ENCODE measurements at regions of chr20 and their contacts with region 1.

Region 1: DNA sequence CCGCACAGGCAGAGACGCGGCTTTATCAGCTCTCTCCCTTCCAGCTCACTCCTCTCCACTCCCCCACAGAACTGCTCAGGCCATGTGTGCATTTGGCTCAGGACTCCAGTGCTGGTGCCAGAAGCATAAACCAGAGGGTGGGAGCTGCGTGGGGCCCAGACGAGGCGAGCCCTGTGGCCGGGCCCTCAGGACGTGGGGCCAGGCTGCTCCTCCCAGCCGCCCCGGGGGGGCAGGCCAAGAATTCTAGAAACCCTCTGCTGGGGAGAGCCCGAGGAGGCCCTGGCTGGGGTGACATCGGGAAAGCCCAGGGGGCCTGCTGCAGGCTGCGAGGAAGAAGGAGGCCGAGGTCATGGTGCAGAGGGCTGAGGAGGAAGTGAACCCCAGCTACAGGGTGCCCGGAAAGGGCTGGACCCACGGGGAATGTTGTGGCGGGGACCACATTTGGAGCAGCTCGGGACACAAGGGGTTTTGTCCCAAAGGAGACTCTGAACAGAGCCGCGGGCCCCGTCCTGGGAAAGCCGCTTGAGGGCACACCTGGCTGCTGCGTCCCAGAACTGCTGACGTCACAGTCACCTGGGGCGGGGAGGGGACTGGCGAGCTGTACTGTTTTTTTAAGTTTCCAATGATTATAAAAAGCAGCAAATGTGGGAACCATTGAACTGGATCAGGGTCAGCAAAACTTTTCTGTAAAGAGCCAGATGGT is 107.1 kb downstream of the BANF2 start:
- DNase-seq: peak; percentile 86
- ATAC-seq: peak; percentile 91

Region 2: GRCh38 chr20:17749975-17750721 is 56.7 kb before region 1 on chr20:
- intact Hi-C with region 1: loop called (anchors 5 kb)
- DNase-seq: peak; percentile 81
- ATAC-seq: peak; percentile 92

Region 3: DNA sequence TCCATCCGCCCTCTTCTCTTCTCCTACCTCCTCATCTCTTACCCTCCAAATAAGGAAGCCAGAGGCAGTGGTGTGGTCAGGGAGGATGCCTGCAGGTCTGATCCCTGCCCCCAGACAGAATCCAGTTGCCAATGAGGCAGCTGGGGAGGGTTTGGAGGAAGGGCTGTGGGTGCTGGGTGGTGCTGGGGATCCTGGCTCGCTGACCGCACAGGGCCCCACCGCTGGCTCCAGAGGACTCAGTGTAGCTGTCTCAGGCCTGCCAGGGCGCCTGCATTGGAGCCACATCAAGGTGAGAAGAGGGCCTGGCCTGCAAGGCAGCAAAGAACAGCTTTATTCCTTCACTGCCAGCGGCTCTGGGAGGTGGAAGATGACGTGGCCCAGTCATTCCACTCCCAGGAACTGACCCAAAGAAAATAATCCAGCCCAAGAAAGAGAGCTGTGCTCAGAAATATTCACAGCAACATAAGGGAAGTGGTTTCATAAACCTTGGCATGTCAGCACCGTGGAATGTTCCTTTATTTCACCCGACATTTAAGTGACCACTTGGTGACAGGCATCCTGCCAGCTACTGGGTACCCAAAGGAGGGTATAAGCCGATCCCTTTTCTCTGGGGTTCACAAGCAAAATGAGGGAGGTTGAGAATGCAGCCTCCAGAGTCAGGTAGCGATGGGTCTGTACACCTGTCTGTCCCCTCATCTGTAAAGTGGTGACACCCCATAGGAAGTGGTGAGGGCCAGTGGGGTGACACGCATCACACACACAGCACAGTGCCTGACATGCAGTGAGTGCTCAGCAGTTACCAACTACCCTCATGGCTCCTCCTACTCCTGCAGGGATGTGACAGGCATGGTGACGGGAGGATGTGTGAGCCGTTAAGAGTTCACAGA is 36.6 kb after region 1 on chr20:
- intact Hi-C with region 1: loop called (anchors 5 kb)
- DNase-seq: no peak
- ATAC-seq: peak; percentile 75

Region 4: GRCh38 chr20:17854307-17854903 is 47.5 kb after region 1 on chr20:
- intact Hi-C with region 1: no loop called
- DNase-seq: no peak
- ATAC-seq: peak; percentile 42